Esophagus muscularis mucosa (tissue), 4 donors: ENCODE measurements at regions of chr5 and their contacts with region 1.

Region 1: DNA sequence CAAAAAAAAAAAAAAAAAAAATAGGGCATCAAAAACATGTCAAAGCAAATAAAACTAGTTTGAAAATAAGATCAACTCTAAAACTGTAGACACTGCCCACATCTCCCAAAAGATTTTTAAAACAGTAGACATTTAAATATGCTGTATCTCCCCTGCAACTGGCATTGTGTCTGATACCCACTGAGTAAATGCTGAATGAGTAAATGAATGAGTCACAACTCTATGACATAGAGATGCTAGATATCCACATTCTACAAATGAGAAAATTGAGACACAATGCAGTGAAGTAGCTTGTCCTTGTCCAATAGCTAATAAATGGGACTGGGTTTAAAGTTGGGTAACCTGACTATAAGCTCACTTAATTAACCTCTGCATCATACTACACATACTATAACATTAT is 14.1 kb upstream of the MAP1B start:
- DNase-seq: no peak
- H3K4me3 ChIP-seq: no peak overlapping the region
- H3K27ac ChIP-seq: no peak overlapping the region
- H3K4me1 ChIP-seq: no peaks in the 10 kb centered on the region
- H3K27me3 ChIP-seq: no peaks in the 10 kb centered on the region
- CTCF ChIP-seq: no peak
- EP300 ChIP-seq: no peak
- POLR2A ChIP-seq: no peak

Region 2: GRCh38 chr5:71932655-71933338 is 160.4 kb before region 1 on chr5:
- intact Hi-C with region 1: loop called (anchors 10 kb)
- DNase-seq: peak; percentile 91
- H3K4me3 ChIP-seq: no peak overlapping the region
- H3K27ac ChIP-seq: peak overlapping the region; percentile 72 to 83 (median 78)
- H3K4me1 ChIP-seq: peaks cover 20 to 28% (median 25%) of the 10 kb centered on the region in 4 donors
- H3K27me3 ChIP-seq: no peaks in the 10 kb centered on the region
- CTCF ChIP-seq: no peak
- EP300 ChIP-seq: no peak
- POLR2A ChIP-seq: no peak